Gastrocnemius medialis (tissue), 4 donors: ENCODE measurements at regions of chr15 and their contacts with region 1.

Region 1: GRCh38 chr15:63986751-63987341 is 59.4 kb downstream of the DAPK2 start:
- DNase-seq: no peak
- ATAC-seq: no peak
- H3K4me3 ChIP-seq: no peak overlapping the region
- H3K27ac ChIP-seq: peak overlapping the region; percentile 93 to 96 (median 94)
- H3K4me1 ChIP-seq: peaks cover 78 to 80% of the 10 kb centered on the region in 2 donors
- H3K27me3 ChIP-seq: no peaks in the 10 kb centered on the region
- CTCF ChIP-seq: no peak
- POLR2A ChIP-seq: no peak

Region 2: GRCh38 chr15:63752075-63752684 is 234.7 kb before region 1 on chr15:
- in situ Hi-C with region 1: no loop called
- intact Hi-C with region 1: no loop called
- DNase-seq: peak in 1 of 2 donors; percentile 27
- ATAC-seq: peak; percentile 90 to 91
- H3K4me3 ChIP-seq: no peak overlapping the region
- H3K27ac ChIP-seq: peak overlapping the region; percentile 29 to 66 (median 50)
- H3K4me1 ChIP-seq: peaks cover 0 to 13% of the 10 kb centered on the region in 2 donors
- H3K27me3 ChIP-seq: no peaks in the 10 kb centered on the region
- CTCF ChIP-seq: peak; percentile 77 to 82 (median 79)
- POLR2A ChIP-seq: no peak

Region 3: DNA sequence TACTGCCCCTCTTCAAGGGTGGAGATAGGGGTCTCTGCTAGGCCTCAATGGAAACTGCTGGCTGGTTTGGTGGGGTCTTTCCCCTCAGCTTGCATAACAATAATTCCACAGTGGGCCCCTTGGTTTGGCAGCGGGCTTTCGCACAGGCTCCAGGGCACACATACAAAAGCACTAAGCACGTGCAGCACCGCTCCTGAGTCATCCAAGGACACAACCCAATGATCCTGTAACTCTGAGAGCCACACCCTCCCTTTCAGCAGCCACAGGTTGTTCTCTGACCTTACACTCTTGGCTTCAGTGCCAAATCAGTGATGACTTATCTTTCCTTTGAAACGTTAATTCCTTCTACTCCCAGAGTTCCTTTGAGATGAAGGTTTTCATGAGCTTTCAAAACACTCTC is 17.7 kb after region 1 on chr15:
- in situ Hi-C with region 1: no loop called
- intact Hi-C with region 1: loop called (anchors 1 kb)
- DNase-seq: peak; percentile 85 to 89
- ATAC-seq: peak; percentile 77 to 83
- H3K4me3 ChIP-seq: no peak overlapping the region
- H3K27ac ChIP-seq: peak overlapping the region; percentile 69 to 94 (median 80)
- H3K4me1 ChIP-seq: peaks cover 82 to 91% of the 10 kb centered on the region in 2 donors
- H3K27me3 ChIP-seq: no peaks in the 10 kb centered on the region
- CTCF ChIP-seq: no peak
- POLR2A ChIP-seq: no peak

Region 4: DNA sequence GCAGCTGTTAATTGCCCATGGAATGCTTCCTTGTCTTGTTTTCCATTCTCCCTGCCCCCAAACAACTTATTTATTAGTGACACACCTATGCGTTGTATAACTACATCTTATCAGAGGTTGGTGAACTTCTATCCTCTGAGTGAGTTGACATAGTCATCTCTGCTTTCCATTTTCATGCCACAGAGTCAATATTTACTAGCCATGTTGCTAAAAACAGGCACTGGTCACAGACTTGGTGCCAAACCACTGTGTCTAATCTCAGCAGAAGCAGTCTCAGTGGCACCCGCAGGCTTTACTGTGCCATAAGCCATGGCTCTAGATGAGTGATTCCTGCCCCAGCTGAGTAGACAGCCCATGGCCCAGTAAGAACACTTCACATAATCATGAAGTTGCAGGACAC is 32.9 kb after region 1 on chr15:
- in situ Hi-C with region 1: no loop called
- intact Hi-C with region 1: loop called (anchors 1 kb)
- DNase-seq: peak; percentile 89 to 90
- ATAC-seq: peak; percentile 76 to 78
- H3K4me3 ChIP-seq: no peak overlapping the region
- H3K27ac ChIP-seq: peak overlapping the region; percentile 84 to 94 (median 90)
- H3K4me1 ChIP-seq: peaks cover 95 to 98% of the 10 kb centered on the region in 2 donors
- H3K27me3 ChIP-seq: no peaks in the 10 kb centered on the region
- CTCF ChIP-seq: no peak
- POLR2A ChIP-seq: peak; percentile 17 to 21

Region 5: DNA sequence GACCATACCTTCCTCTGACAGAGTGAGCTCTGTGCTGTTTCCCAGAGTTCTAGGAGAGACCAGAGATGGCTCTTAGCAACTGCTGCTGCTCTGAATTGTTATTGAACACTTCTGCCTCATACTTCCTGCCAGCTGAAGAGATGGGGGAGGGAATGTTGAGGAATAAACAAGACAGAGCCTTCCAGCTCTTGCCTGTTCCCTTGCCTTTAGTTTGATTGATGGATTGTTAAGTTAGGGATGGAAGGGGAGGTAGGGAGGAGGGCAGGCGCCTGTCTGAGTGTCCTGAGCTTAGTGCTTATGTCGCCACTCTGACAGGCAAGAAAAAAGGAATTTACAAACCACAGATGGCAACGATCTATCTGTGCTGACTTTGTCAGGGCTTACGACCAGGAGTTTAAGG is 516.4 kb after region 1 on chr15:
- in situ Hi-C with region 1: no loop called
- intact Hi-C with region 1: no loop called
- DNase-seq: no peak
- ATAC-seq: no peak
- H3K4me3 ChIP-seq: no peak overlapping the region
- H3K27ac ChIP-seq: no peak overlapping the region
- H3K4me1 ChIP-seq: peaks cover 19 to 43% of the 10 kb centered on the region in 2 donors
- H3K27me3 ChIP-seq: no peaks in the 10 kb centered on the region
- CTCF ChIP-seq: no peak
- POLR2A ChIP-seq: no peak